ENCODE measurements at regions of chr19 and their contacts with region 1.

Region 1: DNA sequence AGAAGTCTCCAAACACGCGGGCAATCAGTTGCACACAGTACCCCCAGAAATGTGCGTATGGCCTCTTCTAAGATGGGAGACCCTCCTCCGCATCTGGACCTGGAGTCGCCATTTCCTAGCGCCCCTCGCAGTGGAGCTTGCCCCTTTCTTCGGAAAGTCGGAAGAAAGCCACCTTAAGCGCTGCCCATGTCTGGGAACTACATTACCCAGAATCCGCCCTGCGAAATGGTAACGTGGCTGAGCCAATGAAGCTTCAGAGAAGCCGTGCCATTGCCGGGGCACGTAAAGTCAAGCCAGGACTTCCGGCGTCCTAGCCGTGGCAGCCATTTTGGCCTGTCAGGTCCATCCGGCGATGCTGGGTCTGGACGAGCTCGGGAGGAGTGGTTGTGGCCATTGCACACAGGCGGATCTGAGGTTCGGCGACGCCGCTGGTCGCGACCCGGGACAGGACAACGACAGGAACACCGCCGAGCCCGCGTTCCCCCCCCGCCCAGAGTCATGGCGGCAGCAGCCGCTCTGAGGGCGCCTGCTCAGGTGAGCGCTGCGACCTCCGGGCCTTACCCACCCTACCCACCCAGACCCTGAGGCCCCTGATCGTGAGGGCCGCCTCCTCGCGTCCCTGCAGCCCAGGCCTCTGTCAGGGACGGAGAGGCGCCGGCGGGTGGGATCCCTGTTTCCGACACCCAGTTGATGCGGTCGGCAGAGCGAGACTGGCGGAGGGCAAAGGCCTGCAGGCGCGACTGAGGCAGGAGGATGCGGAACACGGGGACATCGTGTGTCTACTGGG is at the start of gene ZNF586:
- DNase-seq: peak; percentile 64 to 89 (median 82)
- ATAC-seq: peak; percentile 99
- H3K4me3 ChIP-seq: peak within 1 kb of the TSS; percentile 91
- H3K4me3 Mint-ChIP-seq: peak within 1 kb of the TSS; percentile 90 to 98 (median 96)
- H3K27ac ChIP-seq: peak within 1 kb of the TSS; percentile 86
- H3K27ac Mint-ChIP-seq: peak within 1 kb of the TSS; percentile 79 to 97 (median 94)
- H3K4me1 ChIP-seq: peaks cover 6 to 12% of the 10 kb centered on the region in 2 donors
- H3K4me1 Mint-ChIP-seq: peaks cover 8 to 47% (median 38%) of the 10 kb centered on the region in 7 donors
- H3K27me3 ChIP-seq: no peaks in the 10 kb centered on the region
- H3K27me3 Mint-ChIP-seq: no peaks in the 10 kb centered on the region
- total RNA-seq, gene ZNF586: 16.4 to 47.5 (median 42.6) TPM

Region 2: DNA sequence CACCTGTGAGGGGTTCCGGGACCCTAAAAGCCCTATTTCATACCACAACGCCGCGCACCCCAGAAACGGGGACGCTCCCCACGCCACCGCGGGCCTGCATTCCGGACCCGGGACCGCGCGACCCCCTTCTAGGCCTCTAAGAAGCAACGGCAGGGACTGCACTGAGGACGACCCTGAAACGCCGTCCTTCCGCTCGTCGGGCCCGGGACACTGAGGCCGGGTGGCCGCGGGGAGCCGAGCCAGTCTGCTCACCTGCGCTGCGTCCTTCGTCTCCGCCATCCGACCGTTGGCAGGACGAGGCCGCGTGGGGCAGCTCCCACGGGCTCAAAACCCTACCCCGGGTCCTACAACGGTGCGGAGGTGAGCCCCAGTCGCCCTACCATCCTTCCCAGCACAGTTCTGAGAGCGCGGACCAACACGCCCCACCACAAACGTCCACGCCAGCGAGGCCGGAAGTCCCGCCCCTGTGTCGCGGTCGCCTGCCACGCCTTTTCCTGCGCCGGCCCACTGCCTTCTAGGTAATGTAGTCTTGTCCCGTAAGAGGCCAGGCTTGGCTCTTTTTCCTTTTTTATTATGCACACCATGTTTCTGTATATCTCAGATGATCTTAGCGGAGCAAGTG is 210.0 kb before region 1 on chr19 and contains the start of gene ZNF550:
- CTCF ChIA-PET with region 1: no interaction called
- POLR2A ChIA-PET with region 1: no interaction called
- intact Hi-C with region 1: loop called in 1 of 2 experiments (anchors 1 kb)
- DNase-seq: peak; percentile 71 to 85 (median 84)
- ATAC-seq: peak; percentile 99
- H3K4me3 ChIP-seq: peak within 1 kb of the TSS; percentile 89
- H3K4me3 Mint-ChIP-seq: peak within 1 kb of the TSS; percentile 87 to 99 (median 98)
- H3K27ac ChIP-seq: peak within 1 kb of the TSS; percentile 82
- H3K27ac Mint-ChIP-seq: peak within 1 kb of the TSS; percentile 81 to 96 (median 91)
- H3K4me1 ChIP-seq: peaks cover 16 to 19% of the 10 kb centered on the region in 2 donors
- H3K4me1 Mint-ChIP-seq: peaks cover 21 to 45% (median 33%) of the 10 kb centered on the region in 7 donors
- H3K27me3 ChIP-seq: no peaks in the 10 kb centered on the region
- H3K27me3 Mint-ChIP-seq: peaks cover 0 to 16% (median 4%) of the 10 kb centered on the region in 5 donors
- total RNA-seq, gene ZNF550: 12.9 to 56.2 (median 23.5) TPM

Region 3: DNA sequence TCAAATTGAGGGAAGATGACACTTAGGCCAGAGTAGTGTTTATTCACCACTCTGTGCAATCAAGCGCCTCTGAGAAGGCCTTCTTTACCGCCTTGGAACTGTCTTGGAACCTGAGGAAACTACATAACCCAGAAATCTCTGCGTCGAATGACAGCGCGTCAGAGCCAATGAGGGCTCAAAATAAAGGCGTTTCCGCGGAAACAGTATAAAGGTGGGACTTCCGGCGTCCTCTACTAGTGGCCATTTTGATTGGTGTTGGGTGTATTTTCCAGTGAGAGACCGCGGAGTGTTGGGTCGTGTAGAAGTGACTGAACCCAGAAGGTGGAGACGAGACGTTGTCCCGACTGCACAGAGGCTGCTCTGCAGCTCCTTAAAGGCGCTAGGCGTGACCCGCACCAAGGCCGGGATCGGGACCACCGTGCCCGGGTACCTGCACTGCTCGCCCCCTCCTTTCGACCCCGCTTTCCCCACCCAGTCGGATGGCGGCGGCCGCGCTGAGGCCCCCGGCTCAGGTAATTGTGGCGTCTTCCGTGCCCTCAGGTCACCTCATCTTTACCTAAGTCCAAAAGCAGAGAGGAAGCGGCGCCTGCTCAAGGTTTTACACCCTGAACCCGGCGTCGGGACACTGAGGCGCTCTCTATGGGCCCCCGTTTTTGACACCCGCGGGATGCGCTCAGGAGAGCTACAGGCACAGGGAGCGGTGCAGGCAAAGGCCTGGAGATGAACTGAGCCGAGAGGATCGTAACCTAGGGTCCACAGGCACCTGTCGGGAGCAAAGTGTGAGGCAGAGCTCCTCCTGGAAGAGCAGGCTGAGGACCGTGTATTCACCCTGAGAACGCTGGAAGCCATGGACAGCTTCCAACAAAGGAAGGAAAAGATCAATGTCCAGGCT is 22.7 kb before region 1 on chr19 and contains the start of gene ZNF776:
- CTCF ChIA-PET with region 1: no interaction called
- POLR2A ChIA-PET with region 1: no interaction called
- intact Hi-C with region 1: loop called (anchors 1 kb)
- DNase-seq: peak; percentile 40 to 90 (median 84)
- ATAC-seq: peak; percentile 99
- H3K4me3 ChIP-seq: peak within 1 kb of the TSS; percentile 86
- H3K4me3 Mint-ChIP-seq: peak within 1 kb of the TSS; percentile 91 to 99 (median 94)
- H3K27ac ChIP-seq: peak within 1 kb of the TSS; percentile 85
- H3K27ac Mint-ChIP-seq: peak within 1 kb of the TSS; percentile 81 to 99 (median 94)
- H3K4me1 ChIP-seq: peaks cover 6 to 16% of the 10 kb centered on the region in 2 donors
- H3K4me1 Mint-ChIP-seq: peaks cover 13 to 40% (median 26%) of the 10 kb centered on the region in 7 donors
- H3K27me3 ChIP-seq: no peaks in the 10 kb centered on the region
- H3K27me3 Mint-ChIP-seq: no peaks in the 10 kb centered on the region
- total RNA-seq, gene ZNF776: 18.9 to 52.3 (median 21.8) TPM

Region 4: GRCh38 chr19:57850553-57851017 is 81.0 kb after region 1 on chr19:
- CTCF ChIA-PET with region 1: no interaction called
- POLR2A ChIA-PET with region 1: no interaction called
- intact Hi-C with region 1: loop called in 1 of 2 experiments (anchors 1 kb)
- DNase-seq: no peak
- ATAC-seq: no peak
- H3K4me3 ChIP-seq: peak overlapping the region; percentile 72
- H3K4me3 Mint-ChIP-seq: peak overlapping the region; percentile 93 to 97 (median 94)
- H3K27ac ChIP-seq: peak overlapping the region; percentile 92
- H3K27ac Mint-ChIP-seq: peak overlapping the region; percentile 90 to 98 (median 95)
- H3K4me1 ChIP-seq: peaks cover 7 to 11% of the 10 kb centered on the region in 2 donors
- H3K4me1 Mint-ChIP-seq: peaks cover 22 to 32% (median 28%) of the 10 kb centered on the region in 7 donors
- H3K27me3 ChIP-seq: no peaks in the 10 kb centered on the region
- H3K27me3 Mint-ChIP-seq: no peaks in the 10 kb centered on the region

Region 5: DNA sequence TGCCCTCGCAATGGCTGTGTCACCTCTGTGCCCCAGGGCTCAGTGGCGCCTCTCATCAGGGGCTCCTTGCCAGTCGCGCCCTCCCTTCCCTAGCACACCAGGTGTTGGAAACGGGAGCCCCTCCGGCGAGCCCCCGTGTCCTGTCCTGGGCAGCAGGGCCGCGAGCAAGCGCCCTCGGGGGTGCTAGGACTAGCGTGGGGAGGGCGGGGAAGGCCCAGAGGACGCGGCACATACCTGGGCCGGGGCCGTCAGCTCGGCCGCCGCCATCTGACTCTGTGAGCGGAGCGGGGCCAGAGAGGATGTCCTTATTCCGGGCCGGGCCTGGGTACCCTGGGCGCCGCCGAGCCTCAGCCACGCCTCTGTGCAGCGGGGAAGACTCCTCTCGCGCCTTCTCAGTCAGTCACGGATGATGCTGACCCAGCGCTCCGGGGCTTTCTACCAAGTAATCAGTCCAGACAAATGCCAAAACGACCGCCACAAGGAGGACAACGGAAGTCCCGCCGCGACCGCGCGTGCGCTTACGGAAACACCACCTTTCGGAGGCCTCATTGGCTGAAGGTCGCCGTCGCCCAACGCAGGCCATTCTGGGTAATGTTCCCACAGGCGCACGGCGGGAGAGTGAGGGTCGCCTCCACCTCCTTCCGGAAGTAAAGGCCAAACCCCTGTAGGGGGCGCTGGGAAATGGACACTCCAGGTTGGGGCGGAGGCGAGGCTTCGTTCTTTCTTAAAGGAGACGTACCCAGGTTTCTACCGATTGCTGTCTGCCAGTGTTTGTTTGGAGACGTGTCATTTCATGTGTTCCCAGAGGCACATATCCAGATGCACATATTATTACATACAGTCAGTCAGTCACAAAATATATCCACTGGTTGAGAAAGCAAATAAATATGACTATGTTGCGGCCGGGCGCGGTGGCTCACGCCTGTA is 177.9 kb after region 1 on chr19 and contains the start of gene ZNF256:
- CTCF ChIA-PET with region 1: no interaction called
- POLR2A ChIA-PET with region 1: no interaction called
- intact Hi-C with region 1: loop called in 1 of 2 experiments (anchors 1 kb)
- DNase-seq: peak; percentile 55 to 85 (median 77)
- ATAC-seq: peak; percentile 97
- H3K4me3 ChIP-seq: peak within 1 kb of the TSS; percentile 71
- H3K4me3 Mint-ChIP-seq: peak within 1 kb of the TSS; percentile 89 to 97 (median 95)
- H3K27ac ChIP-seq: peak within 1 kb of the TSS; percentile 80
- H3K27ac Mint-ChIP-seq: peak within 1 kb of the TSS; percentile 83 to 97 (median 92)
- H3K4me1 ChIP-seq: peaks cover 6 to 9% of the 10 kb centered on the region in 2 donors
- H3K4me1 Mint-ChIP-seq: peaks cover 10 to 28% (median 21%) of the 10 kb centered on the region in 7 donors
- H3K27me3 ChIP-seq: no peaks in the 10 kb centered on the region
- H3K27me3 Mint-ChIP-seq: peaks cover 0 to 4% (median 0%) of the 10 kb centered on the region in 5 donors
- total RNA-seq, gene ZNF256: 5.2 to 13.8 (median 11.8) TPM

Measured in naive thymus-derived CD4-positive, alpha-beta T cell (primary cell).